Mammary epithelial cell (primary cell): ENCODE measurements at regions of chr15 and their contacts with region 1.

Region 1: GRCh38 chr15:27059610-27060202 is 88.7 kb downstream of the GABRG3 start:
- DNase-seq: no peak
- H3K4me3 ChIP-seq: no peak overlapping the region
- H3K27ac ChIP-seq: no peak overlapping the region
- H3K4me1 ChIP-seq: no peaks in the 10 kb centered on the region
- H3K27me3 ChIP-seq: no peaks in the 10 kb centered on the region
- CTCF ChIP-seq: peak in 1 of 2 donors; percentile 29

Region 2: DNA sequence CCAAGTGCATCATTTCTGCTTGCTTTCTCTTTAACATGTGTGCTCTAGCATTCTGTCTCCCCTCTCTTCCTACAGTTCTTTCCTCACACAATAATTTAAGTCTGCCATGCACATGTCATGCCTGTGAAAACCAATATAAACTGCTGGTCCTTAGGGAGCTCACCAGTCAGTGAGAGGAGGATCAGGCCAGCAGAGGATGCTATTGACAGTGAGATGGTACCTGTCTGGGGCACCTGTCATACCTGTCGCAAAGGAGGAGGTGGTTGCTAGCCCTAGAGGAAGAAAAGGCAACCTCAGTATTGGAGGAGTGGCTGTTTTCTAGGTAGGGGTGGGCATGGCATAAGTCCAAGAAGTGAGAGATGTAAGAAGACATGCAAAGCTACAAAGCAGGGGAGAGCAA is 105.9 kb after region 1 on chr15:
- CTCF ChIA-PET with region 1: no interaction called
- dilution Hi-C with region 1: loop called (anchors 10 kb)
- in situ Hi-C with region 1: no loop called
- intact Hi-C with region 1: no loop called
- DNase-seq: no peak
- H3K4me3 ChIP-seq: no peak overlapping the region
- H3K27ac ChIP-seq: no peak overlapping the region
- H3K4me1 ChIP-seq: no peaks in the 10 kb centered on the region
- H3K27me3 ChIP-seq: no peaks in the 10 kb centered on the region
- CTCF ChIP-seq: no peak